ENCODE measurements at regions of chr2 and their contacts with region 1.

Region 1: GRCh38 chr2:168346725-168347477 is 99.5 kb upstream of the STK39 start:
- DNase-seq: peak; percentile 56 to 80 (median 73)
- ATAC-seq: peak; percentile 86 to 87
- H3K4me3 ChIP-seq: peak overlapping the region; percentile 93
- H3K27ac ChIP-seq: no peak overlapping the region
- H3K4me1 ChIP-seq: no peaks in the 10 kb centered on the region
- H3K27me3 ChIP-seq: no peaks in the 10 kb centered on the region

Region 2: GRCh38 chr2:168500516-168500915 is 153.6 kb after region 1 on chr2:
- intact Hi-C with region 1: no loop called
- DNase-seq: no peak
- ATAC-seq: no peak
- H3K4me3 ChIP-seq: no peak overlapping the region
- H3K27ac ChIP-seq: no peak overlapping the region
- H3K4me1 ChIP-seq: peaks cover 7% of the 10 kb centered on the region
- H3K27me3 ChIP-seq: no peaks in the 10 kb centered on the region

Region 3: GRCh38 chr2:168687314-168687713 is 340.4 kb after region 1 on chr2:
- intact Hi-C with region 1: loop called in 2 of 4 experiments (anchors 5 to 10 kb)
- DNase-seq: no peak
- ATAC-seq: peak; percentile 51 to 57
- H3K4me3 ChIP-seq: no peak overlapping the region
- H3K27ac ChIP-seq: no peak overlapping the region
- H3K4me1 ChIP-seq: peaks cover 7% of the 10 kb centered on the region
- H3K27me3 ChIP-seq: no peaks in the 10 kb centered on the region

Region 4: GRCh38 chr2:168699844-168700417 is 353.0 kb after region 1 on chr2:
- intact Hi-C with region 1: loop called in 2 of 4 experiments (anchors 5 to 10 kb)
- DNase-seq: peak; percentile 81 to 94 (median 92)
- ATAC-seq: peak; percentile 62 to 72
- H3K4me3 ChIP-seq: no peak overlapping the region
- H3K27ac ChIP-seq: peak overlapping the region; percentile 25
- H3K4me1 ChIP-seq: peaks cover 3% of the 10 kb centered on the region
- H3K27me3 ChIP-seq: no peaks in the 10 kb centered on the region

Region 5: GRCh38 chr2:168712049-168712448 is 365.1 kb after region 1 on chr2:
- intact Hi-C with region 1: loop called in 1 of 4 experiments (anchors 10 kb)
- DNase-seq: no peak
- ATAC-seq: no peak
- H3K4me3 ChIP-seq: no peak overlapping the region
- H3K27ac ChIP-seq: no peak overlapping the region
- H3K4me1 ChIP-seq: no peaks in the 10 kb centered on the region
- H3K27me3 ChIP-seq: no peaks in the 10 kb centered on the region

Region 6: GRCh38 chr2:168758970-168759820 is 412.3 kb after region 1 on chr2:
- intact Hi-C with region 1: loop called in 3 of 4 experiments (anchors 2 to 5 kb)
- DNase-seq: no peak
- ATAC-seq: peak; percentile 67 to 74
- H3K4me3 ChIP-seq: no peak overlapping the region
- H3K27ac ChIP-seq: no peak overlapping the region
- H3K4me1 ChIP-seq: peaks cover 7% of the 10 kb centered on the region
- H3K27me3 ChIP-seq: no peaks in the 10 kb centered on the region

Region 7: DNA sequence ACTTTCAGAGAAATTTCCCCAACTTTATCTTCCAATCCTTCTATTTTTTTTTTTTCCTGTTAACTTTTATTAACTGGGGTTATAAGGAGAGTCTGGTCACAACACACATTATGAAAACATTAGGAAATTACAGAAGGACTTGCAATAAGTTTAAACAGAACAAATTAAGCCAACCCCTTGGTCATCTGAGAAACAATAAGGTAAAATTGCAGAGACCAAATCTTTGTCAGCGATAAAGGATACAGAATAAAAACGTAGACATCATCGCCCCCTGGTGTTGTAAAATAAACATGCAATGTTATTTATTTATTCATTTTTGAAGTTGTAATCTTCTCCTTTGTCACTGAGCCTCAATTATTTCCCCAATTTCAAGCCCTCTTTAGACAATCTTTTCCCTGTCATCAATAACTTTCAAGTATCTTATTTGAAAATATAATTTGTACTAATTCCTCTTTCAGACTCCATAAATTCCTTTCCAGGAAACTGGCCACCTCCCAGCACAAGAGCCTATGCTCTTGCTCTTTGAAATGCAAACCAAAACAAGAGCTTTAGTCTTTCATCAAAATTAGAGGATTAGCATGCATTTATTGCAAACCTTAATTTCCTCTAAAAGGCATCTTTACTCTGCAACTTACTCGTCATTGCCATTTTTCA is 573.7 kb after region 1 on chr2:
- intact Hi-C with region 1: loop called in 3 of 4 experiments (anchors 5 kb)
- DNase-seq: no peak
- ATAC-seq: no peak
- H3K4me3 ChIP-seq: no peak overlapping the region
- H3K27ac ChIP-seq: no peak overlapping the region
- H3K4me1 ChIP-seq: no peaks in the 10 kb centered on the region
- H3K27me3 ChIP-seq: peaks cover 2% of the 10 kb centered on the region

Measured in right cardiac atrium (tissue), 5 donors.